ENCODE measurements at regions of chr20 and their contacts with region 1.

Region 1: GRCh38 chr20:53738039-53738944 is 144.7 kb upstream of the ZNF217 start:
- DNase-seq: peak; percentile 54
- H3K4me3 ChIP-seq: peak overlapping the region; percentile 46
- H3K27ac ChIP-seq: peak overlapping the region; percentile 82
- H3K4me1 ChIP-seq: peaks cover 52% of the 10 kb centered on the region
- H3K27me3 ChIP-seq: no peaks in the 10 kb centered on the region
- CTCF ChIP-seq: no peak

Region 2: GRCh38 chr20:53594068-53595017 is 143.9 kb before region 1 on chr20:
- intact Hi-C with region 1: loop called (anchors 10 kb)
- DNase-seq: peak; percentile 98
- H3K4me3 ChIP-seq: peak overlapping the region; percentile 97
- H3K27ac ChIP-seq: peak overlapping the region; percentile 99
- H3K4me1 ChIP-seq: peaks cover 53% of the 10 kb centered on the region
- H3K27me3 ChIP-seq: no peaks in the 10 kb centered on the region
- CTCF ChIP-seq: peak; percentile 40

Region 3: DNA sequence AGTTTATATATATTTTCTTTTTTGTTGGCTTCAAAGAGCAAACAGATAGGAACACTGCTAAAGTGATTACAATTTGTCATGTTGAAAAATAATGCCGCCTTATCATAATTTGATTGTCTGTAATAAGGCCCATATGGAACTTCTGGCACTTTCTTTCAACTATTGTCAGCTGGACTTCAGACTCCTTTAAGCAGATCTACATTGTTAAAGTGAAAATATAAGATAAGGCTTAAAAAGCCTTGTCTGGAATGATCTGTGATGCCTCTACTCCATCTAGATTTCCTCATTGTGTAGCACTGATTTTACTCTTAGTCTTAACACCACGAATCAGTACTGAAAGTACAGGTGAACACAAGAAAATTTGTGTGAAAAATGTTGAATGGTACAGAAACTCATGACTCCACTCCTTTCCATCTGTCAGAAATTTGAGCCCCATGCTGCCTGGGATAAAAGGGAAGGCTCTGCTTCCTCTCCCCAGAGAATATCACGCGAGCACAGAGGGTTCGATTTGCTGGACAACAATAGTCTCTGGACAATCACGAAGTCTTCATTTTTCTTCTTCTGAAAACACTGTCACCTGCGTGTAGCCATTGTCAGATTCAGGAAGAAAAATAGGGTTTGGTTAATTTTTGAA is 276.1 kb after region 1 on chr20:
- intact Hi-C with region 1: no loop called
- DNase-seq: no peak
- H3K4me3 ChIP-seq: no peak overlapping the region
- H3K27ac ChIP-seq: no peak overlapping the region
- H3K4me1 ChIP-seq: no peaks in the 10 kb centered on the region
- H3K27me3 ChIP-seq: no peaks in the 10 kb centered on the region
- CTCF ChIP-seq: no peak

Measured in left ventricle myocardium inferior (tissue), 1 donor.